Motor neuron (in vitro differentiated cells): ENCODE measurements at regions of chr9 and their contacts with region 1.

Region 1: DNA sequence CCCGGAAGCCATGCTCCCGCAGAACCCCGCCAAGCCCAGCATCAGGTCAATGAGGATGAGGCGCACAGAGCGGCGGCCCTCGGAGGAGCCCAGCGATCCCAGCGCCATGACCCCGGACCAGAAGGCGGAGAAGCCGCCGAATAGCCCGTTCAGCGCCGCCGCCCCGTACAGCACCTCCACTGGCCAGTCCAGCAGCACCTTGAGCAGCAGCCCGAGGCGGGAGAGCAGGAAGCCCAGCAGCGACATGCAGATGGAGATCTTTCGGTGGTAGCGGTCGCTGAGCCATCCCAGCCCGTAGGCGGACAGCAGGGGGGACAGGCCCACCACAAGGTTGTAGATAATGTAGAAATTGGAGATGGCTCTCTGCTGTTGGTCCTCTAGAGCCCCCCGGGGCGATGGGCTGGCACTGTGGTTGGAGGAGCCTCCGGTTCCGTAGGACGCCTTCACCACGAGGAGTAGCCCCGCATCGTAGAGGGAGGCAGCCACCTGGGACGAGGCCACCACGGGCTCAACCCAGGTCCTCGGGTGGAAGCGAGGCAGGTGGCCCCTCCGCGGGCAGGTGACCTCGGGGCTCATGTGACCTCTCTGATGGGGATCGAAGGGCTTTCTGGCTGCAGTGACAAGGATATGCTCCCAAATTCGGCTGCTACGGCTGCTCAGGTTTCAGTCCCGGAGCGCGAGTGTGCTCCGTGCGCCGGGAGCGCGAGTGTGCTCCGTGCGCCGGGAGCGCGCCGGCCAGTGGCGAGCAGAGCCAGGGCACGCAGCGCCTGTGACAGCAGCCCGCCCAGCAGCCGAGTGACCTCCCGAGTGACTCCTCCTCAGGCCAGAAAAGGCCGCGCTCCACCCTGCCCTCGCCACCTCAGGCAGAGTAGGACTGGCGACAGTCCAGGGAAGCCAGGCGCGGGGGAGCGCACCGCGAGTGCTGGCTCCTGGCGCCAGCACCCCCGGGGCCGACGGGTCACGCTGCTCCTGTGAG is at the start of gene SLC46A2:
- ATAC-seq: peak in 5 of 8 experiments; percentile 16 to 82 (median 68)
- H3K4me3 ChIP-seq: peak within 1 kb of the TSS; percentile 12 to 28 (median 18)
- H3K27ac ChIP-seq: no peak within 1 kb of the TSS
- H3K4me1 ChIP-seq: peaks cover 0 to 3% of the 10 kb centered on the region in 2 donors
- total RNA-seq, gene SLC46A2: 0.05 to 0.73 (median 0.17) TPM in 6 of 8 experiments, not detected in the others

Region 2: DNA sequence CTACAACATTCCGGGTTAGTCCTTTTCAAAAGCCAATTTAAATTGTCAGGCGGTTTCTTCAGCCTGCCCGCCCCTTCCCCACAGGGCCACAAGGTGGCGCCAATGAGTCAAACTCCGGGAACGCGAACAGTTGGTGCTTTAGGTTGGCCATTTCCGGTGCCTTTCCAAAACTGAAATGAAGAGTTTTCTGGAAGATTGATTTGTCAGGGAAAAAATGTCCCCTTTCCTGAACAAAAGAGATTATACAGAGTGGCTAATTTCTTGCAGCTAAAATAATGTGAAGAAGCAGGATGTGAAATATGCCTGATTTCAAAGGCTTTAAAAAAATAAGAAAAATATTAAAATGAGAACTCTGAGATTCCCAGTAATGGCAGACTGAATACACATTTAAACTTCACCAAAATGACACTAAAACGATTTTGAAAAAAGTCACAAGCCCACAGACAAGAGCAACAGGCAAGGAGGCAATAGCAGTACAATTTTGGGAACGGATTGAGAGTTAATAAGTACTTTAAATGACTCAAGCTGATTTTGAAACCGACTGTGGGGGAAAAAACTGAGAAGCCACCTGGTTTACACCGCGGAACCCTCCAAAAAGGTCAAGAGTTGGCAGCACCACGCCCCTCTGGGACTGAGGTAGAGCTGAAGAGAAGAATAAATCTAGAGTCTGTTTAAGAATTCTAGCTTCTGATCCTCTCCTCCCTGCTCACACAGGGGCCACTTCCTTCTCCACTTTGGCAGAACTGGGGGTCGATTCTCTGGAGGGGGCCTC is 45.4 kb before region 1 on chr9:
- in situ Hi-C with region 1: loop called in 1 of 9 experiments (anchors 10 kb)
- ATAC-seq: peak in 4 of 8 experiments; percentile 62 to 89 (median 86)
- H3K4me3 ChIP-seq: no peak overlapping the region
- H3K27ac ChIP-seq: no peak overlapping the region
- H3K4me1 ChIP-seq: no peaks in the 10 kb centered on the region